GM12878 (cell line): ENCODE measurements at regions of chr3 and their contacts with region 1.

Region 1: GRCh38 chr3:39447637-39448483 is 19.6 kb upstream of the MOBP start:
- DNase-seq: peak; percentile 25
- ATAC-seq: peak; percentile 98
- H3K4me3 ChIP-seq: no peak overlapping the region
- H3K27ac ChIP-seq: no peak overlapping the region
- H3K4me1 ChIP-seq: no peaks in the 10 kb centered on the region
- H3K27me3 ChIP-seq: no peaks in the 10 kb centered on the region; a peak in 1 of 4 replicates
- CTCF ChIP-seq: peak; percentile 73 to 92 (median 87)
- EP300 ChIP-seq: no peak
- POLR2A ChIP-seq: no peak
- RAD21 ChIP-seq: peak; percentile 69

Region 2: GRCh38 chr3:39406368-39407258 is 41.2 kb before region 1 on chr3 and contains the start of gene RPSA:
- CTCF ChIA-PET with region 1: interaction called, 20 read pairs
- POLR2A ChIA-PET with region 1: no interaction called
- RAD21 ChIA-PET with region 1: interaction called, 5 read pairs
- SMC1A ChIA-PET with region 1: interaction called, 3 read pairs
- in situ Hi-C with region 1: no loop called
- intact Hi-C with region 1: no loop called
- DNase-seq: peak; percentile 93
- ATAC-seq: peak; percentile 91
- H3K4me3 ChIP-seq: peak within 1 kb of the TSS; percentile 94
- H3K27ac ChIP-seq: peak within 1 kb of the TSS; percentile 83
- H3K4me1 ChIP-seq: no peaks in the 10 kb centered on the region
- H3K27me3 ChIP-seq: no peaks in the 10 kb centered on the region
- CTCF ChIP-seq: peak; percentile 42 to 55 (median 42); a peak in 5 of 6 replicates
- EP300 ChIP-seq: 0 out of 4 replicates have a peak, but pooled peaks of 1 of the 2 experiments have one; percentile 24
- POLR2A ChIP-seq: peak; percentile 100
- RAD21 ChIP-seq: peak; percentile 51
- polyA plus RNA-seq, gene RPSA: 2,843 to 4,532 TPM

Region 3: DNA sequence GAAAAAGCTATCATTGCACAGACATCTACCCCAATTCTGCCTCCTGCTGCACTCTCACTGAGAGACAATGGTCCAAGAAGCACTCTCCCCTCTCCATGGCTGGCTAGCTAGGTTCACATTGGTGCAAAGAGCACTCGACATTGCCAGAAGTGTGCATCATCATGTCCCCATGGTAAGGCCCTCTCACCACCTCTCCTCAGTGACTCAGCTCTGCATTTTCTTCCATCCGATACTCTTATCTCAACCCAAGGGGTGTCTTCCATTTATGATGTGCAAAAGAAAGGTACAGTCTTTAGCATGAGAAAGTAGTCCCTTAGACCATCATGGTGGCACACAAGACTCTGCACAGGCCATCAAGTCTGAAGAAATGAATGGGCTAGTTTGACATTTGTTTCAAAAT is 27.3 kb before region 1 on chr3:
- CTCF ChIA-PET with region 1: interaction called, 12 read pairs
- POLR2A ChIA-PET with region 1: no interaction called
- RAD21 ChIA-PET with region 1: no interaction called
- SMC1A ChIA-PET with region 1: interaction called, 4 read pairs
- in situ Hi-C with region 1: no loop called
- intact Hi-C with region 1: no loop called
- DNase-seq: no peak
- ATAC-seq: no peak
- H3K4me3 ChIP-seq: no peak overlapping the region
- H3K27ac ChIP-seq: no peak overlapping the region
- H3K4me1 ChIP-seq: no peaks in the 10 kb centered on the region
- H3K27me3 ChIP-seq: no peaks in the 10 kb centered on the region
- CTCF ChIP-seq: no peak
- EP300 ChIP-seq: no peak
- POLR2A ChIP-seq: no peak
- RAD21 ChIP-seq: no peak

Region 4: DNA sequence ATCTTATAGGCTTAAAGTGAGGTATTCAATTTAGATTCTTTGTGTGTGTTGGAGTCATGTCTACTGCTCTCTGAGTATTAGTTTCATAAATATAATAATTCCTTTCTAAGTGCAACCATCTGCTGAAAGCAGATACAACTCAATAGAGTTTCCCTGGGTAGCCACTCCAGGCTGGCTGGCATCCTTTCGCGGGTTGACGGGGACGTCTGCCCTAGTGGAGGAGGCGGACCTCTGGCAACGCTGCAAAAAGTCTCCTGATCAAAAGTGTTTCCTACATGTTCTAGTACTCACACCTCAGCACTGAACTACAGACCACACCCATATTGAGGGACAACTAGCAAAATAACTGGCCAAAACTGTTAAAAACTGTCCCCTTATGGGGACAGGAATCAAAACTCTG is 22.1 kb after region 1 on chr3:
- CTCF ChIA-PET with region 1: interaction called, 10 read pairs
- POLR2A ChIA-PET with region 1: no interaction called
- RAD21 ChIA-PET with region 1: no interaction called
- SMC1A ChIA-PET with region 1: no interaction called
- in situ Hi-C with region 1: no loop called
- intact Hi-C with region 1: no loop called
- DNase-seq: no peak
- ATAC-seq: no peak
- H3K4me3 ChIP-seq: no peak overlapping the region
- H3K27ac ChIP-seq: no peak overlapping the region
- H3K4me1 ChIP-seq: no peaks in the 10 kb centered on the region
- H3K27me3 ChIP-seq: no peaks in the 10 kb centered on the region
- CTCF ChIP-seq: no peak
- EP300 ChIP-seq: no peak
- POLR2A ChIP-seq: no peak
- RAD21 ChIP-seq: no peak

Region 5: GRCh38 chr3:39479701-39480414 is 32.0 kb after region 1 on chr3:
- CTCF ChIA-PET with region 1: interaction called, 10 read pairs
- POLR2A ChIA-PET with region 1: no interaction called
- RAD21 ChIA-PET with region 1: no interaction called
- SMC1A ChIA-PET with region 1: interaction called, 3 read pairs
- in situ Hi-C with region 1: no loop called
- intact Hi-C with region 1: no loop called
- DNase-seq: no peak
- ATAC-seq: no peak
- H3K4me3 ChIP-seq: no peak overlapping the region
- H3K27ac ChIP-seq: no peak overlapping the region
- H3K4me1 ChIP-seq: no peaks in the 10 kb centered on the region
- H3K27me3 ChIP-seq: no peaks in the 10 kb centered on the region
- CTCF ChIP-seq: no peak
- EP300 ChIP-seq: no peak
- POLR2A ChIP-seq: no peak
- RAD21 ChIP-seq: no peak

Region 6: GRCh38 chr3:39499651-39500240 is 51.9 kb after region 1 on chr3:
- CTCF ChIA-PET with region 1: interaction called, 60 read pairs
- POLR2A ChIA-PET with region 1: no interaction called
- RAD21 ChIA-PET with region 1: interaction called, 4 read pairs
- SMC1A ChIA-PET with region 1: interaction called, 20 read pairs
- in situ Hi-C with region 1: no loop called
- intact Hi-C with region 1: loop called (anchors 1 kb)
- DNase-seq: no peak
- ATAC-seq: no peak
- H3K4me3 ChIP-seq: no peak overlapping the region
- H3K27ac ChIP-seq: no peak overlapping the region
- H3K4me1 ChIP-seq: no peaks in the 10 kb centered on the region
- H3K27me3 ChIP-seq: peaks cover 0 to 14% of the 10 kb centered on the region in 2 experiments
- CTCF ChIP-seq: no peak
- EP300 ChIP-seq: no peak
- POLR2A ChIP-seq: no peak
- RAD21 ChIP-seq: no peak

Region 7: DNA sequence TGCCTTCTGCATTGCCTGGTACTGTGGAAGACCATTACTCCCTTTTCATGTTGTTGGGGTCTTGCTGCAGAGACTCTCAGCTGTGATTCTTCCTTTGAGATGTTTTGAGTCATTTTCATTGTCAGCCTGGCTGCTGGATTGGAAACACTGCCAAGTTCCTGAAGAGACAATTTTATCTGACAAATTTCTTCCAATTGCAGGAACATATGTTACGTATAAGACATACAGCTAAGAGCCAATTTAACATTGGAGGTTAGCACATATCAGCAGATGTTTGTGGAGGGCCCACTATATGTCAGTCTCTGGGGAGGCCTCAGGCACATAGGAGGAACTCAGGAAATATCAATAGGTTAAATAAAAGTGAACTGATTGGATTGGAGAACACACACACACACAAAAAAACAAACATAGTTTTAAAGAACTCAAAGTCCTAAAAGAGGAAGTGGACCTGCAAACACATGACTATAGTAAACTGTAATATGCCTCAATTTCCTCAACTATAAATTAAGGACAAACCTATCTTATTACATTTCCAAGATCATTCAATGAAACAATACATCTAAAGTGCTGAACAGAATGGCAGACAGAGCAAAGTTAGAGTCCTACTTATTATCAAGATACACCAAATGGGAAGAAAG is 533.8 kb after region 1 on chr3:
- CTCF ChIA-PET with region 1: no interaction called
- POLR2A ChIA-PET with region 1: no interaction called
- RAD21 ChIA-PET with region 1: no interaction called
- SMC1A ChIA-PET with region 1: no interaction called
- in situ Hi-C with region 1: no loop called
- intact Hi-C with region 1: no loop called
- DNase-seq: no peak
- ATAC-seq: no peak
- H3K4me3 ChIP-seq: no peak overlapping the region
- H3K27ac ChIP-seq: no peak overlapping the region
- H3K4me1 ChIP-seq: no peaks in the 10 kb centered on the region
- H3K27me3 ChIP-seq: no peaks in the 10 kb centered on the region
- CTCF ChIP-seq: no peak
- EP300 ChIP-seq: no peak
- POLR2A ChIP-seq: no peak
- RAD21 ChIP-seq: no peak